Caco-2 (cell line): ENCODE measurements at regions of chr2 and their contacts with region 1.

Region 1: GRCh38 chr2:218852911-218853667 is 6.5 kb upstream of the WNT6 start:
- DNase-seq: peak; percentile 64 to 75
- H3K4me3 ChIP-seq: no peak overlapping the region
- H3K4me3 Mint-ChIP-seq: no peak overlapping the region
- H3K27ac Mint-ChIP-seq: no peak overlapping the region
- H3K4me1 ChIP-seq: peaks cover 26% of the 10 kb centered on the region
- H3K4me1 Mint-ChIP-seq: peaks cover 37% of the 10 kb centered on the region
- H3K27me3 ChIP-seq: no peaks in the 10 kb centered on the region
- H3K27me3 Mint-ChIP-seq: peaks cover 3% of the 10 kb centered on the region
- CTCF ChIP-seq: peak; percentile 87 to 91

Region 2: DNA sequence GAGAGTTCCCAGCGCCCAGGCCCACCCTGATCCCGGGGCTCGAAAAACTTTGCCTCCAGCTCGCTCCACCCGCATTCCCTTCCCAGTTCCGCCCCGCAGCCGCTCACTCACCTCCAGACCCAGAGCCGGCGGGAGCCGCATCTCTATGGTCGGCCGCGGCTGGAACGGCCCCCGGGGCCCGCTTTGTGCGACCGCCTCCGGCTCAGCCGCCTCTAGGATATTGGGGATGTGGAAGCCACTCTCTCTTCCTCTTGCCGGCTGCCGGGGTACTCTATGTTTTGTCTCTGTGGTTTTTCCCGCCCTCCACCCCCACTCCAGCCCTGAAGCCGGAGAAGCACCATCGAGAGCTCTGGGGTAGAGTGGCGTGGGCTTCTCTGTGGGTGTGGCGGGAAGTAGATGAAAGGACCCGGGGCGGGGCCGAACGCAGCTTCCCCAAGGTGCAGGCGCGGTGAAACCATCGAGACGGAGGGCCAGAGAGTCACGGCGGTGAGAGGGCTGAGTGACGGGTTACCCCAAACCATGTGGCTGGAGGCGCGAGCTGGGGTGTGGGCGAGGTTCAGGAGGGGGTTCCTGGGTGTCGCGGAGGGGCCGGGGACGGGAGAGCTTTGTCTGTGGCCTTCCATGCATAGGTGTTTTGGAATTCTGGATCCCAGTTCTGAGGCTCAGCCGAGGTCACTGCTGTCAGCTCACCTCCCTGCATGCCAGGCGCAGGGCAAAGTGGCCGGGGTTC is 193.7 kb before region 1 on chr2 and contains the starts of genes BCS1L and ZNF142:
- CTCF ChIA-PET with region 1: interaction called, 77 read pairs
- POLR2A ChIA-PET with region 1: interaction called, 4 read pairs
- intact Hi-C with region 1: no loop called
- DNase-seq: peak; percentile 94
- H3K4me3 ChIP-seq: peak within 1 kb of the TSS; percentile 80
- H3K4me3 Mint-ChIP-seq: peak within 1 kb of the TSS; percentile 95
- H3K27ac Mint-ChIP-seq: peak within 1 kb of the TSS; percentile 85
- H3K4me1 ChIP-seq: peaks cover 6% of the 10 kb centered on the region; the same call in 1 of the 2 replicates
- H3K4me1 Mint-ChIP-seq: peaks cover 9% of the 10 kb centered on the region
- H3K27me3 ChIP-seq: no peaks in the 10 kb centered on the region
- H3K27me3 Mint-ChIP-seq: no peaks in the 10 kb centered on the region
- CTCF ChIP-seq: no peak
- total RNA-seq, gene BCS1L: 68.3 and 74.6 TPM in 2 replicates
- total RNA-seq, gene ZNF142: 37.0 and 38.5 TPM in 2 replicates

Region 3: GRCh38 chr2:218732761-218733158 is 120.3 kb before region 1 on chr2:
- CTCF ChIA-PET with region 1: interaction called, 10 read pairs
- POLR2A ChIA-PET with region 1: no interaction called
- intact Hi-C with region 1: no loop called
- DNase-seq: no peak
- H3K4me3 ChIP-seq: no peak overlapping the region
- H3K4me3 Mint-ChIP-seq: no peak overlapping the region
- H3K27ac Mint-ChIP-seq: no peak overlapping the region
- H3K4me1 ChIP-seq: peaks cover 7% of the 10 kb centered on the region; the same call in 1 of the 2 replicates
- H3K4me1 Mint-ChIP-seq: peaks cover 7% of the 10 kb centered on the region
- H3K27me3 ChIP-seq: no peaks in the 10 kb centered on the region
- H3K27me3 Mint-ChIP-seq: no peaks in the 10 kb centered on the region
- CTCF ChIP-seq: no peak

Region 4: GRCh38 chr2:218756599-218757377 is 96.3 kb before region 1 on chr2:
- CTCF ChIA-PET with region 1: interaction called, 11 read pairs
- POLR2A ChIA-PET with region 1: no interaction called
- intact Hi-C with region 1: no loop called
- DNase-seq: no peak
- H3K4me3 ChIP-seq: no peak overlapping the region
- H3K4me3 Mint-ChIP-seq: no peak overlapping the region
- H3K27ac Mint-ChIP-seq: no peak overlapping the region
- H3K4me1 ChIP-seq: no peaks in the 10 kb centered on the region
- H3K4me1 Mint-ChIP-seq: no peaks in the 10 kb centered on the region
- H3K27me3 ChIP-seq: no peaks in the 10 kb centered on the region
- H3K27me3 Mint-ChIP-seq: no peaks in the 10 kb centered on the region
- CTCF ChIP-seq: no peak

Region 5: DNA sequence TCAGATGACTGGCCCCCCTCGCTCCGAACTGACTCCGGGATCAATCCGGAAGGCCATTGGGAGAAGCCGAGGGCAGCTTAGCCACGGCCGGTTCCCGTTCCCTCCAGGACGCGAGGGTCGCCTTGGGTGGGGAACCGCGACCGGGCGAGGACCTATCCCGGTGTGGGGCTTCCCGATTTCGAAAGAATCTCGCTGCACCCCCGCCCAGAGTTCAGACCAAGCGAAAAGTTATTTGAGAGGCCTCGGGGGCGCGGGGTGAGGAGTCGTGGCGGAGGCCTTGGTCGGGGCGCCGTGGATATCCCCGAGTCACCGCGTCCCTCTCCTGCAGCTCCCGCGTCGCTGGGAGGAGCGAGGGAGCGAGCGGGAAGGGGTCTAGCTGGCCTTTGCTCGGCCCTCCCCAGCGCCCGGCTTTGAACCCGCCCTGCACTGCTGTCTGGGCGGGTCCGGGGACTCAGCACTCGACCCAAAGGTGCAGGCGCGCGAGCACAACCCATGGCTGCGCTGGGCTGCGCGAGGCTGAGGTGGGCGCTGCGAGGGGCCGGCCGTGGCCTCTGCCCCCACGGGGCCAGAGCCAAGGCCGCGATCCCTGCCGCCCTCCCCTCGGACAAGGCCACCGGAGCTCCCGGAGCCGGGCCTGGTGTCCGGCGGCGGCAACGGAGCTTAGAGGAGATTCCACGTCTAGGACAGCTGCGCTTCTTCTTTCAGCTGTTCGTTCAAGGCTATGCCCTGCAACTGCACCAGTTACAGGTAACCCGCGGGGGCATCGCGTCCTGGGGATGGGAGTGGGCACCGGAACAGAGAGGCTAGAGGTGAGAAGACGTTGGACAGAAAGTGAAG is 71.2 kb before region 1 on chr2 and contains the start of gene CYP27A1:
- CTCF ChIA-PET with region 1: interaction called, 19 read pairs
- POLR2A ChIA-PET with region 1: no interaction called
- intact Hi-C with region 1: no loop called
- DNase-seq: peak; percentile 74
- H3K4me3 ChIP-seq: peak within 1 kb of the TSS; percentile 35
- H3K4me3 Mint-ChIP-seq: peak within 1 kb of the TSS; percentile 81
- H3K27ac Mint-ChIP-seq: peak within 1 kb of the TSS; percentile 38
- H3K4me1 ChIP-seq: peaks cover 15% of the 10 kb centered on the region; the same call in 1 of the 2 replicates
- H3K4me1 Mint-ChIP-seq: peaks cover 31% of the 10 kb centered on the region
- H3K27me3 ChIP-seq: no peaks in the 10 kb centered on the region
- H3K27me3 Mint-ChIP-seq: no peaks in the 10 kb centered on the region
- CTCF ChIP-seq: no peak
- total RNA-seq, gene CYP27A1: 20.9 and 26.8 TPM in 2 replicates

Region 6: GRCh38 chr2:218876562-218877219 is 23.6 kb after region 1 on chr2:
- CTCF ChIA-PET with region 1: interaction called, 5 read pairs
- POLR2A ChIA-PET with region 1: no interaction called
- intact Hi-C with region 1: loop called (anchors 1 kb)
- DNase-seq: peak; percentile 83 to 87
- H3K4me3 ChIP-seq: no peak overlapping the region
- H3K4me3 Mint-ChIP-seq: no peak overlapping the region
- H3K27ac Mint-ChIP-seq: no peak overlapping the region
- H3K4me1 ChIP-seq: peaks cover 17% of the 10 kb centered on the region
- H3K4me1 Mint-ChIP-seq: no peaks in the 10 kb centered on the region
- H3K27me3 ChIP-seq: no peaks in the 10 kb centered on the region
- H3K27me3 Mint-ChIP-seq: no peaks in the 10 kb centered on the region
- CTCF ChIP-seq: peak; percentile 94 to 97

Region 7: GRCh38 chr2:218995972-218996711 is 143.1 kb after region 1 on chr2:
- CTCF ChIA-PET with region 1: interaction called, 3 read pairs
- POLR2A ChIA-PET with region 1: no interaction called
- intact Hi-C with region 1: loop called (anchors 5 kb)
- DNase-seq: peak; percentile 88 to 95
- H3K4me3 ChIP-seq: peak overlapping the region; percentile 47
- H3K4me3 Mint-ChIP-seq: peak overlapping the region; percentile 82
- H3K27ac Mint-ChIP-seq: peak overlapping the region; percentile 83
- H3K4me1 ChIP-seq: peaks cover 21% of the 10 kb centered on the region
- H3K4me1 Mint-ChIP-seq: peaks cover 9% of the 10 kb centered on the region
- H3K27me3 ChIP-seq: peaks cover 2% of the 10 kb centered on the region
- H3K27me3 Mint-ChIP-seq: peaks cover 6% of the 10 kb centered on the region
- CTCF ChIP-seq: peak; percentile 93 to 95